Esophagus squamous epithelium (tissue), 5 donors: ENCODE measurements at regions of chr10 and their contacts with region 1.

Region 1: GRCh38 chr10:96229568-96230030 is 41.8 kb downstream of the BLNK start:
- DNase-seq: peak; percentile 10
- H3K4me3 ChIP-seq: no peak overlapping the region
- H3K27ac ChIP-seq: no peak overlapping the region
- H3K4me1 ChIP-seq: peaks cover 0 to 12% (median 0%) of the 10 kb centered on the region in 3 donors
- H3K27me3 ChIP-seq: no peaks in the 10 kb centered on the region
- CTCF ChIP-seq: peak; percentile 62 to 97 (median 92)
- POLR2A ChIP-seq: no peak

Region 2: DNA sequence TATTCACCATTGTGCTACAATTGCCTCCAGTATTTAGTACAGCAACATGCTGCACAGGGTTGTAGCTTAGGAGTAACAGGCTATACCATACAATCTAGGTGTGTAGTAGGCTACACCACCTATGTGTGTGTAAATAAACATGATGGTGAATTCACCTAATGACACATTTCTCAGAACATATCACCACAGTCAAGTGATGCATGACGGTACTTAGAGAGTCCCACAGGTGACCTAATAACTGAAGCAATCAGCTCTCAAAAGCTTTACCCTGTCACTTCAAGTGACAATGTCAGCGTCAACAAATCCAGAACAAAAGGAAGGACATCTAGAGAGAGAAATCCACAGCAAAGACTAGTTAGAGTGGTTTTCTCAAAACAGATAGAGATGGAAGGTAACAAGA is 147.4 kb before region 1 on chr10:
- intact Hi-C with region 1: no loop called
- DNase-seq: no peak
- H3K4me3 ChIP-seq: no peak overlapping the region
- H3K27ac ChIP-seq: no peak overlapping the region
- H3K4me1 ChIP-seq: no peaks in the 10 kb centered on the region
- H3K27me3 ChIP-seq: no peaks in the 10 kb centered on the region
- CTCF ChIP-seq: no peak
- POLR2A ChIP-seq: no peak

Region 3: GRCh38 chr10:96292971-96293920 is 63.6 kb after region 1 on chr10:
- intact Hi-C with region 1: loop called (anchors 5 kb)
- DNase-seq: no peak
- H3K4me3 ChIP-seq: no peak overlapping the region
- H3K27ac ChIP-seq: no peak overlapping the region
- H3K4me1 ChIP-seq: peaks cover 0 to 7% (median 0%) of the 10 kb centered on the region in 3 donors
- H3K27me3 ChIP-seq: peaks cover 0 to 14% (median 0%) of the 10 kb centered on the region in 4 donors
- CTCF ChIP-seq: peak; percentile 43 to 71 (median 62)
- POLR2A ChIP-seq: no peak

Region 4: GRCh38 chr10:96370584-96371157 is 141.1 kb after region 1 on chr10:
- intact Hi-C with region 1: no loop called
- DNase-seq: no peak
- H3K4me3 ChIP-seq: no peak overlapping the region
- H3K27ac ChIP-seq: no peak overlapping the region
- H3K4me1 ChIP-seq: peaks cover 0 to 22% (median 9%) of the 10 kb centered on the region in 3 donors
- H3K27me3 ChIP-seq: peaks cover 0 to 46% (median 0%) of the 10 kb centered on the region in 4 donors
- CTCF ChIP-seq: peak; percentile 46 to 80 (median 60)
- POLR2A ChIP-seq: no peak